ENCODE measurements at regions of chr4 and their contacts with region 1.

Region 1: GRCh38 chr4:153344131-153345010 is at the start of gene MND1:
- DNase-seq: peak; percentile 96
- ATAC-seq: peak; percentile 93
- H3K4me3 Mint-ChIP-seq: peak within 1 kb of the TSS; percentile 85
- H3K27ac Mint-ChIP-seq: peak within 1 kb of the TSS; percentile 90
- H3K4me1 Mint-ChIP-seq: peaks cover 36% of the 10 kb centered on the region
- H3K27me3 Mint-ChIP-seq: peaks cover 7% of the 10 kb centered on the region
- total RNA-seq, gene MND1: 34.1 to 41.9 TPM

Region 2: DNA sequence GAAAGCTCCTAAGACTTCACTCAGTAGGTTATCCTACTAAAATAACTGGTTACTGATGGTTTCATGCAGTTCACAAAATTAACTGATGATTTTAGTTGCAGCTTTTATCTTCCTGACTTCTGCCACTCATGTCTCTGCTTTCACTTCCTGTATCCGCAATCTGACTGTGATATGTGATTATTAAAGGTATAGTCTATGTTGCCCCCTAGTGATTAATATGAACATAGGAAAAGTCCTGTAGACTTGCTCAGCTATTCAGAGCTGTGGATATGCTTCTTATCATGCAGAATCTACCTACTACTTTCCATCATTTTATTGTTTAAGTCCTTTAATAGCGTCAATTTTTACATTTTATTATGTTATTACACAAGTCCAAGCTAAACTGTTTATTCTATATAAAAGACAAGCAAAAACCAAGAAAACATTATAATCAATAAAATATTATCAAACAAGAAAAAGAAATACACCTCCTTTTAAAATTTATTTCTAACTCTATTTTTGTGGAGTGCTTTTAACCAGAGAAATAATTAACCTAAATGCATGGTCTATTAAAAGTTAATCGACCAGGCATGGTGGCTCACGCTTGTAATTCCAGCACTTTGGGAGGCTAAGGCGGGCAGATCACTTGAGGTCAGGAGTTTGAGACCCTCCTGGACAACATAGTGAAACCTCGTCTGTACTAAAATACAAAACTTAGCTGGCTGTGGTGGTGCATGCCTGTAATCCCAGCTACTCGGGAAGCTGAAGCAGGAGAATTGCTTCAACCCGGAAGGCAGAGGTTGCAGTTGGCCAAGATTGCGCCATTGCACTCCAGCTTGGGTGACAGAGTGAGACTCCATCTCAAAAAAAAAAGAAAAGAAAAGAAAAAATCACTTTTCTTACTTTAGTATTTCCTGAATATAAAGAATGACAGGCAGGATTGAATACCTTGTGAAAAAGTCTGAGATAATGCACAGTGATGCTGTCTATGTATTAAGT is 299.3 kb after region 1 on chr4:
- CTCF ChIA-PET with region 1: interaction called, 39 read pairs
- POLR2A ChIA-PET with region 1: no interaction called
- intact Hi-C with region 1: loop called (anchors 1 kb)
- DNase-seq: no peak
- ATAC-seq: peak; percentile 92
- H3K4me3 Mint-ChIP-seq: no peak overlapping the region
- H3K27ac Mint-ChIP-seq: no peak overlapping the region
- H3K4me1 Mint-ChIP-seq: peaks cover 23% of the 10 kb centered on the region
- H3K27me3 Mint-ChIP-seq: no peaks in the 10 kb centered on the region

Region 3: DNA sequence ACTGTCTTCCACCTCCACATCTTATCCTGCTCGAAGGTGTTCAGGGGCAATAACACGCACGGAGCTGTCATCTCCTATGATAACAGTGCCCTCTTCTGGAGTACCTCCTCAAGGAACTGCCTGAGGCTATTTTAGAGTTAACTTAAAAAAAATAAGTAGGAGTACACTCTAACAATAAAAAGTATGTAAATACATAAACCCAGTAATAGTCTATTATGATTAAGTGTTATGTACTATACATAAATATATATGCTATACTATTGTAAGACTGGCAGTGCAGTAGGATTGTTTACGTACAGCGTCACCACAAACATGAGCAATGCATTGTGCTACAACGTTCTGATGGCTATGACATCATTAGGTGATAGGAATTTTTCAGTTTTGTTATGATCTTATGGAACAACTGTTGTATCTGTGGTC is 305.2 kb after region 1 on chr4:
- CTCF ChIA-PET with region 1: interaction called, 39 read pairs
- POLR2A ChIA-PET with region 1: no interaction called
- intact Hi-C with region 1: loop called in 1 of 2 experiments (anchors 1 kb)
- DNase-seq: peak; percentile 44
- ATAC-seq: peak; percentile 24
- H3K4me3 Mint-ChIP-seq: no peak overlapping the region
- H3K27ac Mint-ChIP-seq: no peak overlapping the region
- H3K4me1 Mint-ChIP-seq: peaks cover 37% of the 10 kb centered on the region
- H3K27me3 Mint-ChIP-seq: no peaks in the 10 kb centered on the region